Dorsolateral prefrontal cortex (tissue), 120 donors: ENCODE measurements at regions of chr9 and their contacts with region 1.

Region 1: GRCh38 chr9:134171316-134172197 is 7.2 kb upstream of the RNU6ATAC start:
- DNase-seq: no peak
- H3K4me3 ChIP-seq: no peak overlapping the region
- H3K27ac ChIP-seq: peak overlapping the region in 2 of 59 donors; percentile 47 to 65
- H3K27me3 ChIP-seq: peaks cover 0 to 22% (median 0%) of the 10 kb centered on the region in 45 donors
- CTCF ChIP-seq: no peak

Region 2: DNA sequence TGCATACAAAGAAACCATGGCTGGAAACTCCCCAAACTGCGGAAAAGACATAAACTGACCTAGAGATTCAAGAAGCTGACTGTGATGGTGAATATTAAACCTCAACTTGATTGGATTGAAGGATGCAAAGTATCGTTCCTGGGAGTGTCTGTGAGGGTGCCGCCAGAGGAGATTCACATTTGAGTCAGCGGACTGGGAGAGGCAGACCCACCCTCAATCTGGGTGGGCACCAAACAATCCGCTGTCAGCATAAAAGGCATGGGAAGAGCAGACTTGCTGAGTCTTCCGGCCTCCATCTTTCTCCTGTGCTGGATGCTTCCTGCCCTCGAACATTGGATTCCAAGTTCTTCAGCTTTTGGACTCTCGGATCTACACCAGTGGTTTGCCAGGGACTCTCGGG is 60.5 kb before region 1 on chr9:
- intact Hi-C with region 1: no loop called
- DNase-seq: no peak
- H3K4me3 ChIP-seq: no peak overlapping the region
- H3K27ac ChIP-seq: no peak overlapping the region
- H3K27me3 ChIP-seq: no peaks in the 10 kb centered on the region
- CTCF ChIP-seq: no peak

Region 3: DNA sequence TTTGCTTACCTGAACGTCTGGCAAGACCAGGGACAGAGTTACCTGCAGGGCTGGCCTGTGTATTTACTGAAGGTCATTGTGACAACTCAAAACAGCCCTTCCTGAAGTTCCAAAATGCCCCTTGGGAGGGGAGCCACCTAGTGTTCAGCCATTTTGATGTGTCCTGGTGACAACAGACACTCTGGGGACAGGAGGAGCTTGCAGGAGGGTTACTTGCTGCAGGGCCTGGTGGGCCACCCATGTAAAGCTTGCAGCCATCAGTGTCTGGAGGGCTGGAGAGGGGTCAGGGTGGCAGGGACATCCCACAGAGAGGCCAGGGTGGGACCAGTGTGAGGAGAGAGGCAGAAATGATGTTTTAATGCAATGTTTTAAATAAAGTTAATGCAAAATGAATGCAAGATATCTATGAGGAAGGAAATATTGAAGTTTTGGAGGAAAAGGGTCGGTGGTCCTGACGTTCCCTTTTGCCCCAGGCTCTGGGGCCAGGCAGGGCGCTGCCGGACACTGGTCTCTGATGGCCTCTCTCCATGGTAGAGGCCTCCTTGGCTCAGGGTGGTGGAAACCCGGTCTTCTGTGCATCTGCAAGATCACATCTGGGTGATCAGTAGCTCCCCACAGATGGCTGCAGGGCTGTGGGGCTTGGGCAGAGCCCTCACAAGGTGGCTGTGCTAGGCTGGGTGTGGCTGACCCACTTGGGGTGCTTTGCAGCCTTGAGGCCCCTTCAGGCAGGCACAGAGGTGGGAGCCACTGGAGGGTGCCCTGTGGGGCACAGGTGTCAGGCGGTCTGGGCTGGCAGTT is 46.5 kb after region 1 on chr9:
- intact Hi-C with region 1: loop called in 1 of 2 experiments (anchors 5 kb)
- DNase-seq: peak in 1 of 10 donors; percentile 35
- H3K4me3 ChIP-seq: no peak overlapping the region
- H3K27ac ChIP-seq: peak overlapping the region in 3 of 59 donors; percentile 1 to 91 (median 31)
- H3K27me3 ChIP-seq: no peaks in the 10 kb centered on the region
- CTCF ChIP-seq: peak in 10 of 56 donors; percentile 10 to 32 (median 16)

Region 4: DNA sequence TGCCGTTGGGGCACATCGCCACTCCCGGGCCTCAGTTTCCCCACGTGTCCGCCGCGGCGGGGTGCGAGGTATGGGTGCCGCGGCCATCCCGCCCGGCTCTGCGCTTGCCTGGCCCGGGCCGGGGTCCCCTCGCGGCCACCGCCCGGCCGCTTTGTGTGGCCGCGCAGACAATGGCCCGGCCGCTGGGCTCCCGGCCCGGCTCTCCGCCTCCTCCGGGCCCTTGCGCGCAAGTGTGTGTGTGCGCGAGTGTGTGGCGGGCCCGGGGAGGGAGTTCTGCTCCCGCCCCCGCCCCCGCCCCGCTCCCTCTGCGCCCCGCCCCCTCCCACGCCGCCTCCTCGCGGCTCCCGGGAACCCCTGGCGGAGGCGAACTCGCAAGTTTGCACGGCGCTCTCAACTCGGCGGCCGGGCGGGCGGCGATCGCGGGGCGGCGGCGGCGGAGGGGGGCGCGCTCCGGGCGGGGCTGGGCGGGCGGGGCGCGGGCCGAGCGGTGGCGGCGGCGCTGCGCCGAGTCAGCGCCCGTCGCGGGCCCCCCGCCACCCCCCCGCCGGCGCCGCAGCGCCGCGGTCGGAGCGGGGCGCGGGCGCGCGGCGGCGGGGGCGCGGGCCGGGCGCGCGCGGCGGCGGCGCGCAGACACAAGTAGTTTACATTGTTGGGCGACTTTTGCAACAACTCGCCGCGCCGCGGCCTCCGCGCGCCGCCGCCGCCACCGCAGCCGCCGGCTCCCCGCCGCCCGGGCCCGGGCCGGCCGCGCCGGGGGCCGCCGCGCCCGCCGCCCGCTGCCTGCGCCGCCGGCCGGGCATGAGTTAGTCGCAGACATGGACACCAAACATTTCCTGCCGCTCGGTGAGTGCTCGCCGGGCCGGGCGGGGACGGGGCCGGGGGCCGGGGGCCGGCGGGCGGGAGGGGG is 154.5 kb after region 1 on chr9 and contains the start of gene RXRA:
- intact Hi-C with region 1: loop called (anchors 2 to 5 kb)
- DNase-seq: peak in 9 of 10 donors; percentile 42 to 78 (median 57)
- H3K4me3 ChIP-seq: peak within 1 kb of the TSS; percentile 57 to 95 (median 76)
- H3K27ac ChIP-seq: peak within 1 kb of the TSS; percentile 18 to 96 (median 90)
- H3K27me3 ChIP-seq: no peaks in the 10 kb centered on the region
- CTCF ChIP-seq: peak in 15 of 56 donors; percentile 7 to 32 (median 19)
- total RNA-seq, gene RXRA: 32.1 to 133 (median 55.1) TPM

Region 5: DNA sequence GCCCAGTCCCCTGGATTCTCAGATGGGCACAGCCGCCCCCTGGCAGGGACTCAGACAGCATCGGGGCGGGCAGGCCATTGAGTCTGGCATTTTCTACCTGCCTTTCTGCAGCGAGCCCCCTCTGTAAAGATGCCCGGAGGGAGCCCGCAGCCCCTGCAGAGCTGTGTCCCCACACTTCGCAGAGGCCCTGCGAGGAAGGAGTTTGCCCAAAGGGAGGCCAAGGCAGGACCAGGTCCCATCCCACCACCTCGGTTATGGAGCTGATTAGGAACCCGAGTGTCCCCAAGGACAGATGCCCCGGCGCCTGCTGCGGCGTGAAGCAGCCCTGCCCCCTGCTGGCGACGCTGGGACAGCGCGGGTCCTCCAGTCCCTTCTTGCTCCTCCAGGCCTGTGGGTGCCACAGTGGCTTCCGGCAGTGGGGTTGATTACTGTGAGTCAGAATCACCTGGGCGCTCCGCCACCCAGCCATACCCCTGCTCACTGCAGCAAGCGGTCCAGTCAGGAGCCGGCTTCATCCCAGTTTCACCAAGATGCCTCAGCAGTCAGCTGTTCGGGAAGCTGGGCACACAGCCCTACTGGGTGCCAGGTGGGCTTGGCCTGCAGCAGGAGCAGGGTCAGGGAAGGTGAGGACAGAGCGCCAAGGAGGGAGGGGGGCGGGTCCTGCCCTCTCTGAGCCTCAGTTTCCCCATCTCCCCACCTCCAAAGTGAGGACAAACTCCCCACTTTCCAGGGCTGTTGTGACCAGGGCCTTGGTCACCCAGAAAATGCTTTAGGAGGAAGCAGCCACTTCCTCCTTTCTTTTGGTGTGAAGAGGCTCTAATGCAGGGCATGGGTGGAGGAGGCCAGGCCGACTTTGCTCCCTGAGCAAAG is 271.8 kb after region 1 on chr9:
- intact Hi-C with region 1: loop called (anchors 1 kb)
- DNase-seq: peak; percentile 85 to 95 (median 90)
- H3K4me3 ChIP-seq: peak overlapping the region in 13 of 59 donors; percentile 7 to 37 (median 19)
- H3K27ac ChIP-seq: peak overlapping the region in 33 of 59 donors; percentile 0 to 69 (median 35)
- H3K27me3 ChIP-seq: peaks cover 0 to 3% (median 0%) of the 10 kb centered on the region in 45 donors
- CTCF ChIP-seq: peak; percentile 94 to 100 (median 99)